ENCODE measurements at regions of chr2 and their contacts with region 1.

Region 1: DNA sequence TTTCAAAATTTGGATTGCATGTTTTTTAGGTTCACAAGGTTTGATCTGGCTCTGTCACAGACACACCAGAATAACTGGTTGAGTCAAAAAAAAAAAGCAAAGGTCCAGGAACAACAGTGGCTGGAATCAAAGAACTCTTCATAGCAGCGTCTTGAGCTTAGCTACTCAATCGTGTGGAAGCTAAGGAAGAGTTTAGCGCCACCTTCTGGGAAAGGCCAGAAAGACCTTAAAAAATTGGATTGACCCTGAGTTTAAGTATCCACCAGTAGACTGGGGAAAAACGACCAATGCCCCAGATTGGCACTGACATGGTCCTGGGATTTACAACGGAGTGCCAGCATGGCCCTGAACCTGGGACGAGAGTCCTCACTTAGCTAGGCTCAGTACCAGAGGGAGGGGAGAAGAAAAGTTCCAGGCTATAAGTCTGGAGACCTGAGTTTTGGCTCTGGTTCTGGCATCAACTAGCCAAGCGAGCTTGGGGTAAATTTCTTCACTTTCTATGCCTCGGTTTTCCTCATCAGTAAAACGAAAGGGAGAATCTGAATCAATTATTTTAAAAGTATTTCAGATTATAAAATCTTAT is 71.1 kb upstream of the TFCP2L1 start:
- DNase-seq: peak; percentile 63
- H3K4me3 Mint-ChIP-seq: no peak overlapping the region
- H3K27ac Mint-ChIP-seq: no peak overlapping the region
- H3K4me1 Mint-ChIP-seq: peaks cover 26% of the 10 kb centered on the region
- H3K27me3 Mint-ChIP-seq: no peaks in the 10 kb centered on the region
- CTCF ChIP-seq: peak; percentile 57

Region 2: GRCh38 chr2:120847700-120848321 is 508.3 kb before region 1 on chr2:
- CTCF ChIA-PET with region 1: no interaction called
- intact Hi-C with region 1: no loop called
- DNase-seq: no peak
- H3K4me3 Mint-ChIP-seq: no peak overlapping the region
- H3K27ac Mint-ChIP-seq: no peak overlapping the region
- H3K4me1 Mint-ChIP-seq: no peaks in the 10 kb centered on the region
- H3K27me3 Mint-ChIP-seq: no peaks in the 10 kb centered on the region
- CTCF ChIP-seq: no peak

Region 3: GRCh38 chr2:121095257-121096080 is 260.7 kb before region 1 on chr2:
- CTCF ChIA-PET with region 1: interaction called, 44 read pairs
- intact Hi-C with region 1: loop called (anchors 2 kb)
- DNase-seq: peak; percentile 75
- H3K4me3 Mint-ChIP-seq: no peak overlapping the region
- H3K27ac Mint-ChIP-seq: no peak overlapping the region
- H3K4me1 Mint-ChIP-seq: peaks cover 9% of the 10 kb centered on the region
- H3K27me3 Mint-ChIP-seq: no peaks in the 10 kb centered on the region
- CTCF ChIP-seq: peak; percentile 84

Region 4: GRCh38 chr2:121210691-121211090 is 145.5 kb before region 1 on chr2:
- CTCF ChIA-PET with region 1: interaction called, 3 read pairs
- intact Hi-C with region 1: loop called (anchors 5 kb)
- DNase-seq: peak; percentile 82
- H3K4me3 Mint-ChIP-seq: peak overlapping the region; percentile 2
- H3K27ac Mint-ChIP-seq: peak overlapping the region; percentile 64
- H3K4me1 Mint-ChIP-seq: peaks cover 47% of the 10 kb centered on the region
- H3K27me3 Mint-ChIP-seq: no peaks in the 10 kb centered on the region
- CTCF ChIP-seq: peak; percentile 35

Region 5: GRCh38 chr2:121272581-121273515 is 83.3 kb before region 1 on chr2:
- CTCF ChIA-PET with region 1: no interaction called
- intact Hi-C with region 1: loop called (anchors 5 kb)
- DNase-seq: no peak
- H3K4me3 Mint-ChIP-seq: no peak overlapping the region
- H3K27ac Mint-ChIP-seq: no peak overlapping the region
- H3K4me1 Mint-ChIP-seq: peaks cover 21% of the 10 kb centered on the region
- H3K27me3 Mint-ChIP-seq: no peaks in the 10 kb centered on the region
- CTCF ChIP-seq: no peak

Region 6: GRCh38 chr2:121330891-121331290 is 25.3 kb before region 1 on chr2:
- CTCF ChIA-PET with region 1: no interaction called
- intact Hi-C with region 1: no loop called
- DNase-seq: no peak
- H3K4me3 Mint-ChIP-seq: no peak overlapping the region
- H3K27ac Mint-ChIP-seq: no peak overlapping the region
- H3K4me1 Mint-ChIP-seq: peaks cover 19% of the 10 kb centered on the region
- H3K27me3 Mint-ChIP-seq: no peaks in the 10 kb centered on the region
- CTCF ChIP-seq: no peak

Measured in Calu3 (cell line).